BJ (cell line): ENCODE measurements at regions of chr13 and their contacts with region 1.

Region 1: DNA sequence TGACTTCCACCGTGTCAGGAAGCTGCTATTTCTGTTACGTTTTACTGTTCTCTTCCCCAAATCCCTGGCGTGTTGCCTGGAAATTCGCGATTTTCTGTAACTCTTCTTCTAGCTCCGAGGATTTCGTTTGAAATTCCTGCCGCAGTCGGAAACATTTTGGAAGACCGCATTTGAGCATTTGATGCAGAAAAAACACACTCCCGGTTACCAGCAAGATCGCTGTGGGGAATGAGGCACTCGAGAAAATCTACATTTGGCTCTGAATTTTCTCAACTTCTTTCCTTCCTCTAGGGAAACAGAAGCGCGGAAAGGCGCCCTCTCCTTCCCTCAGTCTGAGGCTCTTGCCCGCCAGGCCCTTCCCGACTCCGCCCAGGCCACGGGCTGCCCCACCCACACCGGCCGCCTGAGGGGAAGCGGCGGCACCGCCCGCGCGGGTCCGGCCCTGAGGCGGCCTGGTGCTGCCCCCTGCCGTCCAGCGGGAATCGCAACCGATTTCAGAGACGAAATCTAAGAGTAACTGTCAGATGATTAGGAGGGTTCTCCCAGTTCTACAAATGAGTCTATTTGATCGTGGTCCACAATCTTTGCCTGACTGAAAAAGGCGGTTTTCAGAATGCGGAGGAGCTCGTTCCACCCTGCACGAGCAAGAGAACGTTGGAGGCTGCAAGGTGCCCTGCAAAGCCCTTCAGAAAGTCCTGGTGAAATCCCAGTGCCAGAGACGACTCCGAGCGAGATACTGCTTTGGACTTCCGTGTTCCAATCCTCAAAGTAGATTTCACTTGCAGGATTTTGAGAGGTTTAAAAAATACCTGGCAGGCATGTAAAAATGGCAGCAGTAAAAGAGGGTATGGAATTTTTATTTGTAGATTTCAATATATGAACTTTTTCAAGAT is 18.4 kb upstream of the TUBGCP3 start:
- DNase-seq: peak; percentile 25
- H3K4me3 ChIP-seq: peak overlapping the region; percentile 44
- H3K27me3 ChIP-seq: peaks cover 1% of the 10 kb centered on the region; the same call in 1 of the 2 replicates
- CTCF ChIP-seq: peak; percentile 74

Region 2: DNA sequence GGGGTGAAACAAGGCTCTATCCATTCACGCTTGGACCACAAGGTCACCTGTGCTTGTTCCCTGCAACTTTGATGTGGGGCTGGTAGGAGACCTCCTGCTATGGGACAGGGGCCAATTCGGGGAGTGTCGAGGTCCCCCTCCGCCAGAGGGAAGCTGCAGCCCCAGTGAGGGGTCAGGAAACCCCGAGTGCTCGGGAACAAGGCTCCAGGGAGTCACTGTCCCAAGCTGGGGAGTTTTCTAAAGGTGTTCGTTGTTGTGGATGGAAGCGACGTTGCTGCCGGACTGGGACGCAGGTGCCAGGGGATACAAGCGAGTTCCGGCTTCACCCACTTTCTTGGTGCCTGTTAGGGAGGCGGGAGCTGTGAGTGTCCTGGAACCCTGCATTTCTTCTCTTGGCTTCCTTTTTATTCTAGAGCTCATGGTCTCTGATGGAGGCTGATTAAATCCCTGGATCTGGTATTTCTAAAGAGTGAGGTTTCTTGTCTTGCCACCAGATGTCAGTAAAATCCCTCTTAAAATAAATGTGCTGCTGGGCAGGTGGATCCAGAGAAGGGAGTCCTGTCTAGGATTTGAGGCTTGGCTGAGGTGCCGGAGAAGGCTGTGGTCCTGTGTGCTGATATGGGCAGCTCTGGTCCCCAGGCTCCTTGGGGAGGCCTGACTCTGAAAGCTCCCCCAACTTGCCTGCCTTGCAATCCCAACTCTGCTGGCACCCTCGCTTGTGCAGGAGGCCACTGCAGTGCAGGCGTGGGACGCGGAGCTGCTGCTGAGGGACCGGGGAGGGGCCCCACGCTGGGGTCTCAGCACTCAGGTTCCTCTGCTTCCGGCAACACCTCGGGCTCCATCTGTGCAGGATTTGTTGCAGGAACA is 1132.0 kb before region 1 on chr13:
- CTCF ChIA-PET with region 1: interaction called, 52 read pairs
- POLR2A ChIA-PET with region 1: interaction called, 4 read pairs
- DNase-seq: no peak
- H3K4me3 ChIP-seq: no peak overlapping the region
- H3K27me3 ChIP-seq: no peaks in the 10 kb centered on the region
- CTCF ChIP-seq: peak; percentile 48

Region 3: DNA sequence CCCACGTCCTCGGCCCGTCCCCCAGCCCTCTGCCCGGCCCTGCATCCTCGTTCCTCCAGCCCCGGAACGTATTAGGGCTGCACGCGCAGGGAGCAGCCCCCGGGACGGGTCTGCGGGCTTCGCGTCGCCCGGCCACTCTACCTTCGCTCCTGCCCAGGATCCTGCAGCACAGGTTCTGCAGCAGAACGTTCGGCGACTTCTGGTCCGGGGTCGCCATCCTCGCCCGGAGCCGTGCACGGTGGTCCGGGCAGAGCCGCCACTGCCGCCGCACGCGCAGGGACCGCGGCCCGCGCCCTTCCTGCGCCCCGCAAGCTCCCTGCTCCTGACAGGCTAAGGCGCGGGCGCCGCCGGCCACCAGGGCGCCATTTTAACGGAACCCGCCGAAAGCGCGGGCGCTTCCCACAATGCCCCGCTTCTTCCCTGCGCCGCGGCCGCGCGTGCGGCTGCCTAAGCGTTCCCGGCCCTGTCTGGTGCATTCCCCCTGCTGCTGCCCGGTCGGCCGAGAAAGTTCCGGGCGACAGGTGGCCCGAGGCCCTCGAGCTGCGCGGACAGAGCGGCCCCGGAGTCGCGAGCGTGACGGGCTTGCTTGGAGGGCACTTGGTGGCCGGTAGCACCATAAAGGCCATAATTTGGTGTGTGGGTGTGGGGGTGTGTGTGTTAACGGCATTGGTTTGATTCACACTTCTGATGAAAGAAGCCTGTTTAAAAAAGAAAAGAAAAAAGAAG is 18.4 kb before region 1 on chr13 and contains the start of gene TUBGCP3:
- CTCF ChIA-PET with region 1: interaction called, 20 read pairs
- POLR2A ChIA-PET with region 1: no interaction called
- DNase-seq: peak; percentile 19
- H3K4me3 ChIP-seq: peak within 1 kb of the TSS; percentile 84
- H3K27me3 ChIP-seq: no peaks in the 10 kb centered on the region
- CTCF ChIP-seq: no peak
- polyA plus RNA-seq, gene TUBGCP3: 11.2 and 15.7 TPM in 2 replicates

Region 4: DNA sequence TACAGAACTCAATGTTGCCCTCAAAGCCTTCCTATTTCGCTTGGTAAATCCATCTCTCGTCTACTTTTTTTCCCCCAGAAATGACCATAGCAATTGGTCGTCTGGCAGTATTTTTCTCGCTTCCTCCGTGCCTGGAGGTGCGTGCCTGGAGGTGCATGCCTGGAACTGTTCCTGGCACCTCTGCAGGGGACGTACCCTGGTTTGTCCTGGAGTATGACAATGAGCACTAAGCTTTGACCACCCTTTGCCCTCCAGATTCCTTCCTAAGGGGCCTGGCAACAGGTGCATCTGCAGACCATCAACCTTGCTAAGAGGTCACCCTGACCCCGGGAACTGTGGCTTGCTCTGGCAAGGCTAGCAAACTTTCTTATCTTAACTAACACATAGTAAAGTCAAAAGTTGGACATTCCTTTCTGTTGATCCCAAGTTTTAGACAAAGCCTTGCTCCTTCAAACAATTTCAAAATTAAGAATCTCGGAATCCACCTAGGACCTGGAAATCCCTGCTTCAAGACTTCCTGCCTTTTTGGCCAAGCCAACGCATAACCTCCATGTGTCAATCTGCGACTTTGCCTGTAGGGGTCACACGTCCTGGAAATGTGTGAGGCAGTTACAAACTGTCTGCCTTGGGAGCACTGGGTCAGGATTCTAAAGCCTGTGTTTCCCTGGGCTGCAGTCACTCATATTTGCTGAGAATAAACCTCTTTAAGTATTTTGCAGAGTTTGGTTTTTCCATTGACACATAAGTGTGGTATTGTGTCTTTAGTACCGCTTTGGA is 10.4 kb after region 1 on chr13:
- CTCF ChIA-PET with region 1: interaction called, 18 read pairs
- POLR2A ChIA-PET with region 1: no interaction called
- DNase-seq: no peak
- H3K4me3 ChIP-seq: no peak overlapping the region
- H3K27me3 ChIP-seq: no peaks in the 10 kb centered on the region; the same call in none of the 2 replicates
- CTCF ChIP-seq: peak; percentile 69